K562 (cell line): ENCODE measurements at regions of chr2 and their contacts with region 1.

Region 1: GRCh38 chr2:113390124-113390849 is 47.2 kb upstream of the ZNG1B start:
- DNase-seq: peak; percentile 51 to 71 (median 57)
- ATAC-seq: peak; percentile 90
- H3K4me3 ChIP-seq: no peak overlapping the region
- H3K27ac ChIP-seq: no peak overlapping the region
- H3K4me1 ChIP-seq: no peaks in the 10 kb centered on the region
- H3K27me3 ChIP-seq: no peaks in the 10 kb centered on the region; a peak in 1 of 5 replicates
- CTCF ChIP-seq: peak; percentile 91 to 95 (median 93)
- EP300 ChIP-seq: no peak
- POLR2A ChIP-seq: no peak
- RAD21 ChIP-seq: peak; percentile 23 to 27; a peak in 1 of 4 replicates

Region 2: GRCh38 chr2:113203901-113204519 is 186.3 kb before region 1 on chr2:
- CTCF ChIA-PET with region 1: interaction called, 20 read pairs
- POLR2A ChIA-PET with region 1: no interaction called
- in situ Hi-C with region 1: no loop called
- intact Hi-C with region 1: loop called (anchors 5 kb)
- DNase-seq: peak; percentile 80 to 82 (median 80)
- ATAC-seq: peak; percentile 97
- H3K4me3 ChIP-seq: no peak overlapping the region
- H3K27ac ChIP-seq: no peak overlapping the region
- H3K4me1 ChIP-seq: no peaks in the 10 kb centered on the region
- H3K27me3 ChIP-seq: peaks cover 2 to 13% of the 10 kb centered on the region in 2 experiments; a peak in 3 of 5 replicates
- CTCF ChIP-seq: peak; percentile 88 to 95 (median 92)
- EP300 ChIP-seq: no peak
- POLR2A ChIP-seq: no peak
- RAD21 ChIP-seq: peak; percentile 83 to 88

Region 3: DNA sequence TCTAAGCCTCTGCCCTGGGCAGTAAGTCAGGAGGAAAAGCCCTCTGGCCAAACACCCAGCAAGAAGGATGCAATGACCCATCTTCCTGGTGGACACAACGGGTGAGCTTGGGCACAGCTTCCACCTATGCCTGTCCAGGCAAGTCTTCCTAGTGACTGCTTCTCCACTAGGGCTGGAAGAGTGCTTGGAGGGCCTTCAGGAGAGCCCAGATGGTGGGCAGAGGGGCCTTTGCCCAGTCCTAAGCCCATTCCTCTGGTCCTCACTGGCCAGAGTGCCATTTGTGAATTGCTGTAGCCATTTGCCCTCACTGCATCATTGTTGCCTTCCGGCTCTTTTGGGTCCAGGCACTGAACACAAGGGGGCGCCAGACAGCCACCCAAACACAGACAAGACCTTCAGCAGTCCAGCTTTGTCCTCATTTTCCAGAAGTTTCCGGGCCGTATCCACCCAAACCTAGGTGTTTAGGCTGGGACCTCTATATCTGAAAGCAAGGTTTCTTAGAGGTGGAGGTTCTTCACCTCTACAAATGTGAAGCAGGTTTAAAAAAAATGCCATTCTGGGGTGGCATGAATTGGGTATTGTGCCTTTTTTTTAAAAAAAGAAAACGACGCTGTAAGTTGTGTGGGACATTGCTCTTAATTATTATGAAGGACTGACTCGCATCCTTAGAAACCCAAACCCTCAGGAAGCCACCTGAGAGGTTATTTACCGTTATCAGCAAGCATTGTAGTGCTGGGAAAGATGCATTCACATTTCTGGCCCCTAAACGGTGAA is 141.1 kb before region 1 on chr2:
- CTCF ChIA-PET with region 1: interaction called, 10 read pairs
- POLR2A ChIA-PET with region 1: interaction called, 3 read pairs
- in situ Hi-C with region 1: no loop called
- intact Hi-C with region 1: no loop called
- DNase-seq: peak; percentile 78 to 85 (median 82)
- ATAC-seq: peak; percentile 94
- H3K4me3 ChIP-seq: no peak overlapping the region
- H3K27ac ChIP-seq: no peak overlapping the region
- H3K4me1 ChIP-seq: peaks cover 0 to 20% of the 10 kb centered on the region in 2 experiments; a peak in 4 of 5 replicates
- H3K27me3 ChIP-seq: no peaks in the 10 kb centered on the region
- CTCF ChIP-seq: peak; percentile 87 to 91 (median 88)
- EP300 ChIP-seq: no peak
- POLR2A ChIP-seq: no peak
- RAD21 ChIP-seq: peak; percentile 56 to 83